Heart right ventricle (tissue), 16 donors: ENCODE measurements at regions of chr12 and their contacts with region 1.

Region 1: GRCh38 chr12:503111-503761 is 43.5 kb downstream of the B4GALNT3 start:
- DNase-seq: no peak
- ATAC-seq: peak in 7 of 8 donors; percentile 50 to 78 (median 62)
- H3K4me3 ChIP-seq: no peak overlapping the region
- H3K27ac ChIP-seq: peak overlapping the region in 7 of 10 donors; percentile 12 to 39 (median 15)
- H3K4me1 ChIP-seq: peaks cover 0 to 43% (median 16%) of the 10 kb centered on the region in 9 donors
- H3K27me3 ChIP-seq: no peaks in the 10 kb centered on the region
- CTCF ChIP-seq: no peak

Region 2: DNA sequence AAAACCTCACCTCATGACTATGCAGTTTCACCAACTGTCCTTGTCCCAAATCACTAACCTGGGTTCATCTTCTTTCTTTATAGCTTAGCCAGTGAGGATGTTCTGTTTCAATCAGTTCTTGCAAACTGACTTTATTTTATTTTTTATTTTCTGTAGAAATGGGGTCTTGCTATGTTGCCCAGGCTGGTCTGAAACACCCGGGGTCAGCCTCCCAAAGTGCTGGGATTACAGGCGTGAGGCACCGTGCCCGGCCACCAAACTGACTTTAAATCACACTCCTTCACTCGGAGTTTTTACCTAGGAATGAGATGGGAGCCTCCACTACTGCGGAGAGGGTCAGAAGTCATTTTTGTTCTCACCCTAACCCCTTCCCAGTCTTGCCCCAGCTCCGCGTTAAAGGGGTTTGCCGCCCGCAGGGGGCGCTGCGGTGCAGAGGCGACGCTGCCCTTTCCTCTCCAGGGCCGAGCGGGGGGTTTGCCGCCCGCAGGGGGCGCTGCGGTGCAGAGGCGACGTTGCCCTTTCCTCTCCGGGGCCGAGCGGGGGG is 50.5 kb before region 1 on chr12:
- intact Hi-C with region 1: loop called in 6 of 10 experiments (anchors 2 to 5 kb)
- DNase-seq: peak; percentile 25 to 55
- ATAC-seq: peak in 3 of 8 donors; percentile 3 to 61 (median 43)
- H3K4me3 ChIP-seq: no peak overlapping the region
- H3K27ac ChIP-seq: no peak overlapping the region
- H3K4me1 ChIP-seq: peaks cover 0 to 38% (median 0%) of the 10 kb centered on the region in 9 donors
- H3K27me3 ChIP-seq: peaks cover 0 to 31% (median 3%) of the 10 kb centered on the region in 7 donors
- CTCF ChIP-seq: no peak

Region 3: GRCh38 chr12:459430-460258 is 43.6 kb before region 1 on chr12 and contains the start of gene B4GALNT3:
- intact Hi-C with region 1: loop called in 6 of 10 experiments (anchors 2 to 5 kb)
- DNase-seq: peak; percentile 24 to 61
- ATAC-seq: peak; percentile 44 to 74 (median 64)
- H3K4me3 ChIP-seq: peak within 1 kb of the TSS; percentile 47 to 67 (median 62)
- H3K27ac ChIP-seq: peak within 1 kb of the TSS in 9 of 10 donors; percentile 50 to 88 (median 81)
- H3K4me1 ChIP-seq: peaks cover 0 to 66% (median 20%) of the 10 kb centered on the region in 9 donors
- H3K27me3 ChIP-seq: peaks cover 0 to 75% (median 20%) of the 10 kb centered on the region in 7 donors
- CTCF ChIP-seq: no peak
- total RNA-seq, gene B4GALNT3: 19.6 to 53.5 (median 36.5) TPM

Region 4: DNA sequence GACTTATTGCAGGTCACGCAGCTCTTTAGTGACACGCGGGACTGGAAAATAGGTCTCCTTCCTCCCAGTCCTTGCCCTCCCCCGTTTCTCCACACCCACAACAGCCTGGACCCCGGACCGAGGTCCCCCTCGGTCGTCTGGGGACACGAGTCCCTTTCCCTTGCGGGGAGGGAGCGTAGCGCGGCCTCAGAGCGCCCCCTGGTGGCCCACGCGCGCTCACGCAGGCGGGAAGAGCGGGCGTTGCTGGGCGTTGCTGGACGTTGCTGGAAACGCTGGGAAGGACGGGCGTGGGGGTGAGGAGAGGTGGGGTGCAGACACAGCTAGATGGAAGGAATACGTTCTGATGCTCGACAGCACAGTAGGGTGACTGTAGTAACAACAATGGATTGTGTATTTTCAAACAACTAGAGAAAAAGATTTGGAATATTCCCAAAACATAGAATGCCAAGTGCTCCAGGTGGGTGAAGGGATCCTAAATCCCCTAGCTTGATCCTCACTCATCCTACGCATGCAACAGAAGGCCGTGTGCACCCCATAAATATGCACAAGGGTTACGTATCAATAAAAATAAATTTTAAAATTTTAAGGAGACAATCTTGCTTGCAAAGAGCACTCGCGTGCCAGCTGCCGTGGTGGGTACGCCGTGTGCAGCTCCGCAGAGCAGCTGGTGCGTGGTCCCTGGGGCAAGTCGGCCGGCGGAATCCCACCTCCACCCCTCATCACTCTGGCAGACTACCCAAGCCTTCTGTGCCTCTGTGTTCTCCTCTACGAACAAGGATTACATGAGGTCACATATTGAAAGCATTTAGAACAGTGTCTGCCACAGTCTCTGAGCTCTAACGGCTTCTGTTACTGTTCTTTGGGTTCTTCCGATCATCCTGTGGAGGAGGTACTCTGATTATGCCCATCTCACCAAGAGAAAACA is 43.9 kb after region 1 on chr12:
- intact Hi-C with region 1: loop called in 5 of 10 experiments (anchors 5 kb)
- DNase-seq: peak; percentile 49 to 80
- ATAC-seq: peak; percentile 23 to 69 (median 46)
- H3K4me3 ChIP-seq: no peak overlapping the region
- H3K27ac ChIP-seq: peak overlapping the region in 7 of 10 donors; percentile 7 to 89 (median 26)
- H3K4me1 ChIP-seq: peaks cover 4 to 62% (median 27%) of the 10 kb centered on the region in 9 donors
- H3K27me3 ChIP-seq: peaks cover 0 to 17% (median 7%) of the 10 kb centered on the region in 7 donors
- CTCF ChIP-seq: peak; percentile 93 to 99 (median 98)

Region 5: DNA sequence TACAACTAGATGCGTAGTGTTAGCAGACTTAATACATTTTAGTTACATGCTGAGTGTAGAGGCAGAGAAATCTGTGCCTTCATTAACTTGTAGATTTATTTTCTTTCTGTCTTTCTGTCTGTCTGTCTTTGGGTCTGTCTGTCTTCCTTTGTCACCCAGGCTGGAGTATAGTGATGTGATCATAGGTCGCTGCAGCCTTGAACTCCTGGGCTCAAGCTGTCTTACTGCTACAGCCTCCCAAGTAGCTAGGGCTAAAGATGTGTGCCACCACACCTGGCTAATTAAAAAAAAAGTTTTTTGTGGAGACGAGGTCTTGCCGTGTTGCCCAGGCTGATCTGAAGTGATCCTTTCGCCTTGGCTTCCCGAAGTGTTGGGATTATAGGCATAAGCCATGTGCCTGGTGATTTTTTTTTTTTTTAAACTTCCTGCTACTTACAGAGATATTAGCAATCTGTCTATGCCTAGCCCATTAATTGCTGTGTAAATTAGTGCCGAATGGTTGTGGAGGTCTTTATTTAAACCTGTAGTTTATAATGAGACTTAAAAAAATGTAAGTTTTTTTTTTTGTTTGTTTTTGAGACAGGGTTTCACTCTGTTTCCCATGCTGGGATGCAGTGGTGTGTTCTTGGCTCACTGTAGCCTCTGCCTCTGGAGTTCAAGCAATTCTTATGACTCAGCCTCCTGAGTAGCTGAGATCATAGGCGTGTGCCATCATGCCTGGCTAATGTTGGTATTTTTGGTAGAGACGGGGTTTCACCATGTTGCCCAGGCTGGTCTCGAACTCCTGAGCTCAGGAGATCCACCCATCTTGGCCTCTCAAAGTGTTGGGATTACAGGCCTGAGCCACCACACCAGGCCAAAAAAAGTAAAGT is 510.6 kb after region 1 on chr12:
- intact Hi-C with region 1: no loop called
- DNase-seq: no peak
- ATAC-seq: peak in 4 of 8 donors; percentile 35 to 66 (median 52)
- H3K4me3 ChIP-seq: no peak overlapping the region
- H3K27ac ChIP-seq: peak overlapping the region in 1 of 10 donors; percentile 34
- H3K4me1 ChIP-seq: peaks cover 0 to 34% (median 8%) of the 10 kb centered on the region in 9 donors
- H3K27me3 ChIP-seq: no peaks in the 10 kb centered on the region
- CTCF ChIP-seq: no peak